PC-9 (cell line): ENCODE measurements at regions of chr9 and their contacts with region 1.

Region 1: GRCh38 chr9:131030239-131031004 is 21.4 kb downstream of the LAMC3 start:
- DNase-seq: no peak
- H3K4me3 ChIP-seq: no peak overlapping the region
- H3K27ac ChIP-seq: no peak overlapping the region
- H3K4me1 ChIP-seq: no peaks in the 10 kb centered on the region
- H3K27me3 ChIP-seq: peaks cover 23% of the 10 kb centered on the region; the same call in 1 of the 2 replicates
- CTCF ChIP-seq: no peak

Region 2: GRCh38 chr9:130847327-130848217 is 182.8 kb before region 1 on chr9:
- CTCF ChIA-PET with region 1: interaction called, 11 read pairs
- POLR2A ChIA-PET with region 1: no interaction called
- intact Hi-C with region 1: no loop called
- DNase-seq: peak in 1 of 2 experiments; percentile 28
- H3K4me3 ChIP-seq: no peak overlapping the region
- H3K27ac ChIP-seq: peak overlapping the region; percentile 1; the same call in 1 of the 2 replicates
- H3K4me1 ChIP-seq: peaks cover 9% of the 10 kb centered on the region
- H3K27me3 ChIP-seq: no peaks in the 10 kb centered on the region
- CTCF ChIP-seq: no peak

Region 3: GRCh38 chr9:131008909-131009618 is 21.4 kb before region 1 on chr9 and contains the start of gene LAMC3:
- CTCF ChIA-PET with region 1: interaction called, 12 read pairs
- POLR2A ChIA-PET with region 1: no interaction called
- intact Hi-C with region 1: no loop called
- DNase-seq: peak in 1 of 2 experiments; percentile 17
- H3K4me3 ChIP-seq: no peak within 1 kb of the TSS
- H3K27ac ChIP-seq: no peak within 1 kb of the TSS
- H3K4me1 ChIP-seq: no peaks in the 10 kb centered on the region
- H3K27me3 ChIP-seq: peaks cover 14% of the 10 kb centered on the region; the same call in 1 of the 2 replicates
- CTCF ChIP-seq: no peak
- total RNA-seq, gene LAMC3: 0.38 and 0.41 TPM in 2 replicates